AG04449 (cell line): ENCODE measurements at regions of chr11 and their contacts with region 1.

Region 1: GRCh38 chr11:126318574-126319373 is 14.9 kb downstream of the DCPS start:
- DNase-seq: peak; percentile 85
- H3K4me3 ChIP-seq: peak overlapping the region; percentile 47
- CTCF ChIP-seq: no peak

Region 2: DNA sequence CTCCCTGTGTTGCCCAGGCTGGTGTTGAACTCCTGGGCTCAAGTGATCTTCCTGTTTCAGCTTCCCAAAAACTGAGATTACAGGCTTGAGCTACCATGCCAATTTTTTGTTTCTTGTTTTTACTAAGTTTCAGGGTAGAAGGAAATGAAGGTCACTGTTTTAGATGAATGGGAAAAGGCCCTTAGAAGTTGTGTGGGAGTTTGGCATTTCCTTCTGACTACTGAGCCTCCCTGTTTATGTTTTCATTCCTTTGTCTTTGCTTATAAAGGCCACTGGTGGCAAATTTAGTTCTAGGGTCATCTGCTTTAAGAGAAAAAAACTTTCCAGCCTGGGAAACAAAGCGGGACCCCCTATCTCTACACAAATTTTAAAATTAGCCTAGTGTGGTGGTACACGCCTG is 72.1 kb before region 1 on chr11:
- CTCF ChIA-PET with region 1: no interaction called
- POLR2A ChIA-PET with region 1: no interaction called
- DNase-seq: no peak
- H3K4me3 ChIP-seq: no peak overlapping the region
- CTCF ChIP-seq: no peak

Region 3: DNA sequence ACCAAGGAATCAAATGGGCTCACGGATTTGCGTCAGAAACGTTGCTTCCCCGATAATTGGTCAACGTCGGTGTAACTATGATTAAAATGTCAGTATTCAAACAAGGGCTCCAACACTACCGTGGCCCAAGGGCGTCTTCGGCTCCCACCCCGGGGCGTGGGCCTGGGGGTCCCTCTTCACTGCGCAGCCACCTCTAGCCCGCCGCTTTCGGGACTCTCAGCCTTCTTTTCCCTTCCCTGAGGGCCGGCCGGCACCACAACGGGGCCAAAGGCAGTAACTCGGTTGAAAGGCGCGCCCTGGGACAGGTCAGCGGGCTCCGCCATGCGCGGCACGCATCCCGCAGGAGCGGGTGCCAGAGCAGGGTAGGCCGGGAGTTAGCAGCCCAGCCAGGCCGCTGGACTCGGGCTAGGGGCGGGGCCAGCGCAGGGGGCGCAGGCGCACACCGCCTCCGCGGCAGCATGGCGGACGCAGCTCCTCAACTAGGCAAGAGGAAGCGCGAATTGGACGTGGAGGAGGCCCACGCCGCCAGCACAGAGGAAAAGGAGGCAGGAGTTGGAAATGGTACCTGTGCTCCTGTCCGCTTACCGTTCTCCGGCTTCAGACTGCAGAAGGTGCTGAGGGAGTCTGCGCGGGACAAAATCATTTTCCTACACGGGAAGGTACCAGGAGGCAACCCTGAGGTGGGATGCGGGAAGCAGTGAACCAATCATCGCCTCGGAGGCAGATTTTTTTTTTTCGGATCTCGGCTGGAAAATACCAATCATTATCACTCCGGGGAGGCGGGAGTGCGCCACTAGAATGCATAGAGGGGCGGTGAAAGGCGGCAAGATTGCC is 14.9 kb before region 1 on chr11 and contains the start of gene DCPS:
- CTCF ChIA-PET with region 1: interaction called, 33 read pairs
- POLR2A ChIA-PET with region 1: interaction called, 10 read pairs
- DNase-seq: no peak
- H3K4me3 ChIP-seq: peak within 1 kb of the TSS; percentile 91
- CTCF ChIP-seq: no peak

Region 4: DNA sequence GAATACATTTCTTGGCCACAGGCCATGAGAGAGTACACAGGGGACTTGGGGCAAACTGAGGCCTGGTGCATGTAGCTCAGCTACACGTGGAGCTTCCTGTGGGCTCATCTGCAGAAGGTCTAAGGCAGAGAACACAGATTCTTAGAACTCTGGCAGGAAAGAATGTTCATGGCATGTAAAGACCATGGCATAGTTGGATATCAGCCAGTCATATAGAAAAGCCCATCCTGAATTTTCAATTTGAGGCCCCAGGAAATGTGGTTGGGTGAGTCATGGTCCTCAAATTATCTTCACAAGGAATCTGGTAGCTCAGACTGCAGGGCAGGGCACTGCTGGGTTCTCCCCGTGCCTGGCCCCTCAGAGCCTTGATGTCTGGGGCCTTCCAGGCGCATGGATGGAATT is 23.0 kb after region 1 on chr11:
- CTCF ChIA-PET with region 1: interaction called, 4 read pairs
- POLR2A ChIA-PET with region 1: interaction called, 10 read pairs
- DNase-seq: peak; percentile 77
- H3K4me3 ChIP-seq: no peak overlapping the region
- CTCF ChIP-seq: no peak

Region 5: DNA sequence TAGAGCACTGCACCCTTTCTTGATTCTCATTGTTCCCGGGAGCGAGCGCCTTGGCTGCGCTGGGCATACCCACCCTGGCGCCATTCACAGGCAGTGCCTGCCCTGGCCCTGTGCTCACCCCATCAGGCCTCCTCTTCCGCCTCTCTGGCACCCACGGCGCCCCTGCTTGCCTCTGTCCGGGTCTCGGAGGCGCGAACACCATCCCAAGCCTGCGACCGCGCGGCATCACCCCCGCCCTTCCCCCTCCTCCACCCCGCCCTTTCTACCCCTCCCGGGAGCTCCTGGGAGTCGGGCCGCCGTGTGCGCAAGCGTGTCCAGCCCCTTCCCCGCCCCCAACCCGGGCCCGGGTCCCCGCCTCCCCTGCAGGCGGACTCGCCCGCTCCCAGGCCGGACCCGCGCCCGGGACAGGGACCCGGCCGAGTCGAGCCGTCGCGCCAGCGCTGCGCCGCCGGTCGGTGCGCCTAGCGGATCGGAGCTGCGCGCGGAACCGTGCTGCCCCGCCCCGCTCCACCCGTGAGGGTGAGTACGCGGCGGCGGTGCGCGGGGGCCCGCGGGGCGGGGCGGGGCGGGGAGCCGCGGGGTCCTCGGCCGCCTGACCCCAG is 36.7 kb after region 1 on chr11 and contains the start of gene ST3GAL4:
- CTCF ChIA-PET with region 1: interaction called, 5 read pairs
- POLR2A ChIA-PET with region 1: interaction called, 16 read pairs
- DNase-seq: no peak
- H3K4me3 ChIP-seq: peak within 1 kb of the TSS; percentile 86
- CTCF ChIP-seq: no peak

Region 6: DNA sequence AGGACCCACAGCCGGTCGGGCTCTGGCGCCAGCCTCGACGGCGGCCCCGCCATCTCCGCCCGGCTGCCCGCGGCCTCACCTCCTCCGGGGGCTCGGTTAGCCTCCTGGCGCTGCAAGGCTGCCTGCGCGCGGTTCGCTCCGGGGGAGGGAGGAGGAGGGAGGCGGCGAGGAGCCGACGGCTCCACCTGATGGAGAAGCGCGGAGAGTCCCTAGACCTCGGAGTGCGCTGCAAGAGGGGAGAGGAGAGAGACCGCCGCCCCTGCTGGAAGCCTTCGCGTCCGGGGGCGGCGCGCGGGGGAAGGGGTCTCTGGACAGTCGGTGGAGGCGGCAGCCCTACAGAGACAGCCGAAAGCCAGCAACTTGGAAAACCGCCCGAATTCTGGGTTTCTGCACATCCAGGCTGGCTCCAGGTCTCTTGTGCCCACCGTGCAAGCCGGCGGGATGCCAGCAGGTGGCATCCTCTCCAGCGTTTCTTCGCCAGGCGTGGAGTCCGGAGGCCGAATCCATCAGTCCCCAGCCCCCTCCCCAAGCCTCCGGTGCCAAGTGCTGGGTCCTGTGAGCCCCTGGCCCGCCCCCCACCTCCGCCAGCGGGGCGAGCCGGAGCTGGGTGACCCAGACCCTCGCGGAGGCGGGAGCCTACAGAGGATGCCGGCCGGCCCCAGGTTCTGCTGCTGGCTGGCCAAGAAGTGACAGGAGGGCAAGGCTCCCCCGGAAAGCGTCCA is 684.6 kb after region 1 on chr11:
- CTCF ChIA-PET with region 1: no interaction called
- POLR2A ChIA-PET with region 1: no interaction called
- DNase-seq: no peak
- H3K4me3 ChIP-seq: peak overlapping the region; percentile 62
- CTCF ChIP-seq: peak; percentile 72